Activated CD8-positive, alpha-beta T cell treated with anti-CD3 and anti-CD28 coated beads, Interleukin-2, amount 10 ng/mL, durations not matched to agents 7 days and 5 days (primary cell): ENCODE measurements at regions of chr14 and their contacts with region 1.

Region 1: GRCh38 chr14:91177073-91178034 is 63.5 kb downstream of the DGLUCY start:
- DNase-seq: peak; percentile 82
- ATAC-seq: peak; percentile 81
- H3K4me3 Mint-ChIP-seq: no peak overlapping the region
- H3K27ac Mint-ChIP-seq: peak overlapping the region; percentile 85
- H3K4me1 Mint-ChIP-seq: peaks cover 36% of the 10 kb centered on the region
- H3K27me3 Mint-ChIP-seq: no peaks in the 10 kb centered on the region

Region 2: GRCh38 chr14:90903101-90903500 is 274.3 kb before region 1 on chr14:
- CTCF ChIA-PET with region 1: interaction called, 179 read pairs
- POLR2A ChIA-PET with region 1: interaction called, 5 read pairs
- DNase-seq: peak; percentile 78
- ATAC-seq: peak; percentile 89
- H3K4me3 Mint-ChIP-seq: no peak overlapping the region
- H3K27ac Mint-ChIP-seq: peak overlapping the region; percentile 30
- H3K4me1 Mint-ChIP-seq: peaks cover 27% of the 10 kb centered on the region
- H3K27me3 Mint-ChIP-seq: no peaks in the 10 kb centered on the region

Region 3: DNA sequence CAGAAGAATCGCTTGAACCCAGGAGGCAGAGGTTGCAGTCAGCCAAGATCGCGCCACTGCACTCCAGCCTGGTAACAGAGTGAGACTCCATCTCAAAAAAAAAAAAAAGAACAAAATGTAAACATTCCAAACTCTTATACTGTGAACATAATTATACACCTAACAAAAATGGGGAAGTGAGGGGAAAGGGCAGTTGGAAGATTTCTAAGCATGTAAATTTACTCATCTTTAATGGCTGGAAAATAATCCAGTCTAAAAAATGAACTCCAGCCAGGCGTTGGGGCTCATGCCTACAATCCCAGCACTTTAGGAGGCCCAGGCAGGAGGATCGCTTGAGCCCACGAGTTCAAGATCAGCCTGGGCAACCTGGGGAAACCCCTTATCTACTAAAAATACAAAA is 105.6 kb before region 1 on chr14:
- CTCF ChIA-PET with region 1: no interaction called
- POLR2A ChIA-PET with region 1: no interaction called
- DNase-seq: no peak
- ATAC-seq: no peak
- H3K4me3 Mint-ChIP-seq: no peak overlapping the region
- H3K27ac Mint-ChIP-seq: no peak overlapping the region
- H3K4me1 Mint-ChIP-seq: peaks cover 67% of the 10 kb centered on the region
- H3K27me3 Mint-ChIP-seq: no peaks in the 10 kb centered on the region

Region 4: GRCh38 chr14:91138511-91139359 is 38.6 kb before region 1 on chr14:
- CTCF ChIA-PET with region 1: interaction called, 35 read pairs
- POLR2A ChIA-PET with region 1: no interaction called
- DNase-seq: peak; percentile 71
- ATAC-seq: peak; percentile 38
- H3K4me3 Mint-ChIP-seq: no peak overlapping the region
- H3K27ac Mint-ChIP-seq: peak overlapping the region; percentile 23
- H3K4me1 Mint-ChIP-seq: peaks cover 63% of the 10 kb centered on the region
- H3K27me3 Mint-ChIP-seq: no peaks in the 10 kb centered on the region

Region 5: DNA sequence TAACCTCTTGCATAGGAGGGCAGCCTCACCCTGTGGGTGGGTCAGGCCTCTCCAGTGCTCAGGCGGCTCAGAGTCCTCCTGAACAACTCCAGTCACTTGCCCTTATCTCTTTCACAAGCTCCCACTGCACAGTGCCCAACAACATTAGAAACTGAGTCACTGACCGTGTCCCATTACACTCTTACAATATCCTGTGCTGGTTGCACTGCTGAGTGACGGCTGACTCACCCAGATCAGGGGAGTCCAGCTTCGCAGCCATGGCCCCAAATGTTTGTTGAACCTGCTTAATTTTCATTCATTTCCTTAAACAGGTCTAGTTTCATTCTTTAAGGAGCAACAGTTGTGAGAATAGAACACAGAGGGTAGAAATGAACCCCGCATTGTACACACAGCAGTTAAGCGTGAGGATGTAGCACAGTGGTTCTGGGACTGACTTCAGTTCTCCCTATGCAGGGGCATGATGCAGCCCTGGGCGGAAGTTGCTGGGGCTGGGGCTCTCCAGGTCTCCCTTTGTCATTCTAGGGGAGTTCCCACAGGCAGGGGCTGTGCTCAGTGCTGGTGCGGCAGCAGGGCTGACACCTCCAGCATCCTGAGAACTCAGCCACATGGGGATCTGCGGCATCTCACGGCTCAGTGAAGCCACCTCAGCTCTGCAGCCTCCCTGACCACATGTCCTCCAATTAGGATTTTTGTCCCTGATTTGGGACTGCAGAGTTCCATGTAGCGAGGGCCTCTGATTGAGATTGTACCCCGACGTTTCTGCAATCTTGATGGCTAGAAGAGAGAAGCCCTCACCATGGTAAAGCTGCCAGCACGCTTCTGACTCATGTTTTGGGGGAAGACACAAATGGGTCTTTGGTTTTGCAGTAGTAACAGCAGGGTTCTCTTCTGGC is 51.0 kb after region 1 on chr14:
- CTCF ChIA-PET with region 1: interaction called, 28 read pairs
- POLR2A ChIA-PET with region 1: interaction called, 6 read pairs
- DNase-seq: peak; percentile 87
- ATAC-seq: peak; percentile 76
- H3K4me3 Mint-ChIP-seq: peak overlapping the region; percentile 75
- H3K27ac Mint-ChIP-seq: peak overlapping the region; percentile 97
- H3K4me1 Mint-ChIP-seq: peaks cover 96% of the 10 kb centered on the region
- H3K27me3 Mint-ChIP-seq: no peaks in the 10 kb centered on the region

Region 6: GRCh38 chr14:91258011-91258618 is 80.8 kb after region 1 on chr14:
- CTCF ChIA-PET with region 1: interaction called, 30 read pairs
- POLR2A ChIA-PET with region 1: interaction called, 4 read pairs
- DNase-seq: no peak
- ATAC-seq: no peak
- H3K4me3 Mint-ChIP-seq: no peak overlapping the region
- H3K27ac Mint-ChIP-seq: peak overlapping the region; percentile 71
- H3K4me1 Mint-ChIP-seq: peaks cover 83% of the 10 kb centered on the region
- H3K27me3 Mint-ChIP-seq: no peaks in the 10 kb centered on the region

Region 7: GRCh38 chr14:91291786-91292405 is 114.5 kb after region 1 on chr14:
- CTCF ChIA-PET with region 1: interaction called, 130 read pairs
- POLR2A ChIA-PET with region 1: interaction called, 6 read pairs
- DNase-seq: no peak
- ATAC-seq: no peak
- H3K4me3 Mint-ChIP-seq: no peak overlapping the region
- H3K27ac Mint-ChIP-seq: peak overlapping the region; percentile 76
- H3K4me1 Mint-ChIP-seq: peaks cover 29% of the 10 kb centered on the region
- H3K27me3 Mint-ChIP-seq: no peaks in the 10 kb centered on the region